ENCODE measurements at regions of chr5 and their contacts with region 1.

Region 1: GRCh38 chr5:138542956-138543729 is at the start of gene ETF1:
- DNase-seq: peak; percentile 99 to 100 (median 100)
- H3K4me3 ChIP-seq: peak within 1 kb of the TSS; percentile 80 to 92
- H3K4me3 Mint-ChIP-seq: peak within 1 kb of the TSS; percentile 95 to 100 (median 100)
- H3K27ac ChIP-seq: peak within 1 kb of the TSS; percentile 100
- H3K27ac Mint-ChIP-seq: peak within 1 kb of the TSS; percentile 99 to 100 (median 100)
- H3K4me1 ChIP-seq: peaks cover 73% of the 10 kb centered on the region
- H3K4me1 Mint-ChIP-seq: peaks cover 48 to 87% (median 71%) of the 10 kb centered on the region in 4 donors
- H3K27me3 ChIP-seq: no peaks in the 10 kb centered on the region
- H3K27me3 Mint-ChIP-seq: no peaks in the 10 kb centered on the region
- total RNA-seq, gene ETF1: 42.6 to 46.5 TPM

Region 2: GRCh38 chr5:138178516-138179276 is 364.4 kb before region 1 on chr5 and contains the starts of genes BRD8 and KIF20A:
- CTCF ChIA-PET with region 1: no interaction called
- POLR2A ChIA-PET with region 1: interaction called, 5 read pairs
- intact Hi-C with region 1: loop called (anchors 2 kb)
- DNase-seq: peak; percentile 85 to 92 (median 88)
- H3K4me3 ChIP-seq: peak within 1 kb of the TSS; percentile 80 to 93
- H3K4me3 Mint-ChIP-seq: peak within 1 kb of the TSS in 1 of 8 donors; percentile 9
- H3K27ac ChIP-seq: peak within 1 kb of the TSS; percentile 72
- H3K27ac Mint-ChIP-seq: peak within 1 kb of the TSS in 2 of 7 donors; percentile 16 to 55
- H3K4me1 ChIP-seq: peaks cover 17% of the 10 kb centered on the region
- H3K4me1 Mint-ChIP-seq: peaks cover 4 to 17% (median 11%) of the 10 kb centered on the region in 4 donors
- H3K27me3 ChIP-seq: no peaks in the 10 kb centered on the region
- H3K27me3 Mint-ChIP-seq: no peaks in the 10 kb centered on the region
- total RNA-seq, gene BRD8: 93.7 to 97.3 TPM
- total RNA-seq, gene KIF20A: not detected

Region 3: DNA sequence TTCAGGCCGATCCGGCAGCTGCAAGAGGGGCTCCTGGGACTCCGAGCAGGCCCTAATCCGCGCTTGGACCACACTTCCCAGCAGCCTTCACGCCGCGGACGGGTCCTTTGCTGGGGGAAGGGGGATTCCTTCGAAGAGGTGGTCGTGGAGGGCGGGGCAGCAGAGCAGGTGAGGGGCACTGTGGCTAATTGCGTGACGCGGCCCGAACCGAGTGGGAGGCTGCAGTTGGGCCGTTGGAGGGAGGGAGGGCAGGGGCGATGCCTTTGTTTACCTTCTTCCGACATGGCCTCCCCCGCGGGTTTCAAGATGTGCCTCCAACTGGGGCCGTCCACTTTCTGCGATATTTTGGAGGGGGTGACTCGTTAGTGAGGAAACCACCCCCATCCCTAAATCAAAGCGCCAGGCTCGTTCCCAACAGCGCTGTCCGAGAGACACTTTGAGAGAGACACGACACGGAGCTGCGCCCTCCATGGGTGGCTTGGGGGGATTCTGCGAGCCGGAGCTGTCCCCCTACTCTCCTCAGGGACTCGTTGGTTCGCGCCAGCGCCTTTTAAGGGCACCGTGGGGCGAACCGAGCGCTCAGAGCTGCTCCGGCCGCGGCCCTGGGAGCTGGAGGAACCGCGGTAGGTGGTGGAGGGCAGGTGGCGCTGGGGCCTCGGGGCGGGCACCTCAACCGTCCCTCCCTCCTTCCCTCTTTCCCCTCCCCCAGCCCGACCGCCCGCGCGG is 205.3 kb before region 1 on chr5 and contains the start of gene FAM53C:
- CTCF ChIA-PET with region 1: no interaction called
- POLR2A ChIA-PET with region 1: interaction called, 20 read pairs
- intact Hi-C with region 1: loop called (anchors 1 kb)
- DNase-seq: peak; percentile 88 to 96 (median 93)
- H3K4me3 ChIP-seq: peak within 1 kb of the TSS; percentile 74 to 85
- H3K4me3 Mint-ChIP-seq: peak within 1 kb of the TSS; percentile 90 to 95 (median 92)
- H3K27ac ChIP-seq: peak within 1 kb of the TSS; percentile 92
- H3K27ac Mint-ChIP-seq: peak within 1 kb of the TSS; percentile 98 to 100 (median 99)
- H3K4me1 ChIP-seq: peaks cover 29% of the 10 kb centered on the region
- H3K4me1 Mint-ChIP-seq: peaks cover 20 to 48% (median 34%) of the 10 kb centered on the region in 4 donors
- H3K27me3 ChIP-seq: no peaks in the 10 kb centered on the region
- H3K27me3 Mint-ChIP-seq: no peaks in the 10 kb centered on the region
- total RNA-seq, gene FAM53C: 19.3 to 20.4 TPM

Region 4: DNA sequence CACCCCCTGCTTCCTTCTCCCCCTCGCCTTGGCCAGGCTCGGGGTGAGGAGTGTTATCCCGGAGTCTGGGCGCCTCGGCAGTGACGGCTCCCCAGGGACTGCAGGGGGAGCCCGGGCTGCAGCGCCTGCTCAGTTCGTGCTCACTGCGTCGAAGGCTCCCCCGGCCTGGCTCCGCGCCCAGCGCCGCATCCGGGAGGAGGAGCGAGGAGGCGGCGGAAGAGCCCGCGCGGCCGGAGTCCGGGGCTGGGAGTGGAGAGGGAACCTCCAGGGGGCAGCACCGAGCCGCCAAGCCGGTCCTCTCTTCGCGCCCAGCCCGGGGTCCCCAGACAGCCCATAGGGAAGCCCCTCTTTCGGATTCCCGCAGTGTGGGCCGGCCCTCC is 79.1 kb before region 1 on chr5:
- CTCF ChIA-PET with region 1: interaction called, 4 read pairs
- POLR2A ChIA-PET with region 1: interaction called, 55 read pairs
- intact Hi-C with region 1: loop called (anchors 1 kb)
- DNase-seq: peak; percentile 91 to 95 (median 94)
- H3K4me3 ChIP-seq: peak overlapping the region; percentile 79 to 85
- H3K4me3 Mint-ChIP-seq: peak overlapping the region; percentile 85 to 97 (median 90)
- H3K27ac ChIP-seq: peak overlapping the region; percentile 90
- H3K27ac Mint-ChIP-seq: peak overlapping the region; percentile 89 to 96 (median 93)
- H3K4me1 ChIP-seq: peaks cover 46% of the 10 kb centered on the region
- H3K4me1 Mint-ChIP-seq: peaks cover 27 to 65% (median 39%) of the 10 kb centered on the region in 4 donors
- H3K27me3 ChIP-seq: no peaks in the 10 kb centered on the region
- H3K27me3 Mint-ChIP-seq: no peaks in the 10 kb centered on the region

Region 5: GRCh38 chr5:138476918-138477317 is 66.2 kb before region 1 on chr5:
- CTCF ChIA-PET with region 1: no interaction called
- POLR2A ChIA-PET with region 1: no interaction called
- intact Hi-C with region 1: no loop called
- DNase-seq: no peak
- H3K4me3 ChIP-seq: no peak overlapping the region
- H3K4me3 Mint-ChIP-seq: no peak overlapping the region
- H3K27ac ChIP-seq: no peak overlapping the region
- H3K27ac Mint-ChIP-seq: no peak overlapping the region
- H3K4me1 ChIP-seq: no peaks in the 10 kb centered on the region
- H3K4me1 Mint-ChIP-seq: no peaks in the 10 kb centered on the region
- H3K27me3 ChIP-seq: no peaks in the 10 kb centered on the region
- H3K27me3 Mint-ChIP-seq: peaks cover 7 to 8% of the 10 kb centered on the region in 2 donors

Region 6: DNA sequence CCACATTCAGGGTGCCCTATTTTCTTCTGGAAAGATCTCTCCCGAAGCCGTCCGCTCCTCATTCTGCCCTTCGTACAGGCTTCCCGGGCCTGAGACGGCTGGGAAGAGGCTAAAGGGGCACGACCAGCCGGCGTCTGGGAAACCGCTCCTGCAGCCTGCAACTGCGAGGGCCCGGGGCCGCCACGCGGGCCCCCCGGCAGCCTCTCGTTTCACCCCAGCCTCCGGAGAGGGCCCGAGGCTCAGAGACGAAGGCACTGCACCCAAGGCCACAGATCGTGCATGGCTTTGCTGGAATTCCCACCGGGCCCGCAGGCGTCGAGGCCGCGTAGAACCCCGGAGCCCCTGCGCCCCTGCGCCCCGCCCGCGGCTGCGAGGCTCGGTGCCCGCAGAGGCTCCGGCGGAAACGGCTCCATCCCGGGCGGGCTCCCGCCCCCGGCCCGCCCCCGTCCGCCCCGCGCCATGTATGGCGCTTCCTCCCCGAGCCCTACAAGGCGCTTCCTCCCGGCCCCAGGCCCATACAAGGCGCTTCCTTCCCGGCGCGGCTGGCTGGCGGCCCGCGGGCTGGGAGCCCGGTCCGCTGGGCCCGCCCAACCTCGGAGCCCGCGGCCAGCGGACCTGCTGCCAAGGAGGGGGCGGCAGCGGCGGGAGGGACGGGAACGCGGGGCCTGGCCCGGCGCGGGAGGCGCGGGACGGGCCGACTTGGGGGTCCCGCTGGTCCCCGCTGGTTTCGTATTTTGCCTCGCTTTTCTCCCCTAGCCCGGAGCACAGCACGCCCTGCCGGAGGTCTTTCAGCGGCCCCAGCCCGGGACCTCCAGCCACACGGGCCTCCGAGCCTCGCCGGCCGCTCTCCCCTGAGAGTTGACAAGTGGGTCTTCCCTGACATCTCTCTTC is 51.2 kb before region 1 on chr5:
- CTCF ChIA-PET with region 1: no interaction called
- POLR2A ChIA-PET with region 1: interaction called, 6 read pairs
- intact Hi-C with region 1: loop called (anchors 1 kb)
- DNase-seq: peak; percentile 81 to 87 (median 83)
- H3K4me3 ChIP-seq: peak overlapping the region in 1 of 2 donors; percentile 60
- H3K4me3 Mint-ChIP-seq: peak overlapping the region; percentile 84 to 97 (median 92)
- H3K27ac ChIP-seq: peak overlapping the region; percentile 34
- H3K27ac Mint-ChIP-seq: peak overlapping the region in 4 of 7 donors; percentile 71 to 94 (median 79)
- H3K4me1 ChIP-seq: peaks cover 24% of the 10 kb centered on the region
- H3K4me1 Mint-ChIP-seq: peaks cover 7 to 21% (median 12%) of the 10 kb centered on the region in 4 donors
- H3K27me3 ChIP-seq: peaks cover 8% of the 10 kb centered on the region
- H3K27me3 Mint-ChIP-seq: peaks cover 4 to 16% of the 10 kb centered on the region in 2 donors

Region 7: GRCh38 chr5:138568061-138568824 is 25.1 kb after region 1 on chr5:
- CTCF ChIA-PET with region 1: interaction called, 15 read pairs
- POLR2A ChIA-PET with region 1: interaction called, 124 read pairs
- intact Hi-C with region 1: no loop called
- DNase-seq: no peak
- H3K4me3 ChIP-seq: no peak overlapping the region
- H3K4me3 Mint-ChIP-seq: peak overlapping the region in 1 of 8 donors; percentile 28
- H3K27ac ChIP-seq: no peak overlapping the region
- H3K27ac Mint-ChIP-seq: peak overlapping the region; percentile 36 to 99 (median 76)
- H3K4me1 ChIP-seq: peaks cover 69% of the 10 kb centered on the region
- H3K4me1 Mint-ChIP-seq: peaks cover 42 to 76% (median 57%) of the 10 kb centered on the region in 4 donors
- H3K27me3 ChIP-seq: no peaks in the 10 kb centered on the region
- H3K27me3 Mint-ChIP-seq: no peaks in the 10 kb centered on the region